Activated CD4-positive, alpha-beta T cell treated with anti-CD3 and anti-CD28 coated beads for 36 hours (primary cell): ENCODE measurements at regions of chr14 and their contacts with region 1.

Region 1: DNA sequence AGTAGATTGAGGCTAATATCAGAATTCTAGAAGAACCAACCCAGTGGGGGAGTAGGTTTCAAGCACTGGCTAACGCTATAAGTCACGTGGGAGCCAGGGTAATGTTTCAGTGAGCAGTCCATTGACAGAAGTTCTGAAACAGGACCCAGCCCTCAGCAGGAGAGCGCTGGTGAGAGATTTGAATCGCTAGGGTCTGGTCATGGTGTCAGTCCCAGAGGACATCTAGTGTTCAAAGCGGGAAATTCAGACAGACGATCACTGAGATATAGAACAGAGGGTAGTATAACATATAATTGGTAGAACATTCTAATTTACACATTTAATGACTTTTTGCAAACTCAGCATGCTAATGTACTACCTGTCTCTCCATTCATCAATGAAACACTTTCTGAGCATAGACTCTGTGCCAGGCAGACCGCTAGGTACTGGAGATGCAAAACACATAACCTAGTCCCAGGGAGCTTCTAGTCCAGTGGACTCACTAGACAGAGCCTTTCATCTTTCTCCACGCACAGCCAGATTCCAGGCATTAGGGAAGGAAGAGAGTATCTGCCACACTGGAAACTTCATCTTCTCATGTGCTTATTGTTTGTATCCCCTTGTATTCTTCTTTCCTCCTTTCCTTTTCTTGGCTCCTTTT is 35.4 kb upstream of the RNASE3 start:
- DNase-seq: peak; percentile 65
- ATAC-seq: peak; percentile 92
- H3K4me3 Mint-ChIP-seq: no peak overlapping the region
- H3K27ac Mint-ChIP-seq: no peak overlapping the region
- H3K4me1 Mint-ChIP-seq: no peaks in the 10 kb centered on the region
- H3K27me3 Mint-ChIP-seq: peaks cover 8% of the 10 kb centered on the region

Region 2: GRCh38 chr14:20697273-20698017 is 158.3 kb before region 1 on chr14:
- CTCF ChIA-PET with region 1: interaction called, 12 read pairs
- POLR2A ChIA-PET with region 1: no interaction called
- intact Hi-C with region 1: loop called (anchors 1 kb)
- DNase-seq: peak; percentile 78
- ATAC-seq: peak; percentile 95
- H3K4me3 Mint-ChIP-seq: no peak overlapping the region
- H3K27ac Mint-ChIP-seq: no peak overlapping the region
- H3K4me1 Mint-ChIP-seq: peaks cover under 1% of the 10 kb centered on the region
- H3K27me3 Mint-ChIP-seq: no peaks in the 10 kb centered on the region

Region 3: GRCh38 chr14:20757965-20758364 is 97.8 kb before region 1 on chr14:
- CTCF ChIA-PET with region 1: interaction called, 4 read pairs
- POLR2A ChIA-PET with region 1: no interaction called
- intact Hi-C with region 1: loop called in 1 of 2 experiments (anchors 2 kb)
- DNase-seq: peak; percentile 54
- ATAC-seq: no peak
- H3K4me3 Mint-ChIP-seq: no peak overlapping the region
- H3K27ac Mint-ChIP-seq: no peak overlapping the region
- H3K4me1 Mint-ChIP-seq: no peaks in the 10 kb centered on the region
- H3K27me3 Mint-ChIP-seq: no peaks in the 10 kb centered on the region

Region 4: GRCh38 chr14:20866963-20867362 is 11.2 kb after region 1 on chr14:
- CTCF ChIA-PET with region 1: interaction called, 40 read pairs
- POLR2A ChIA-PET with region 1: no interaction called
- intact Hi-C with region 1: no loop called
- DNase-seq: no peak
- ATAC-seq: no peak
- H3K4me3 Mint-ChIP-seq: no peak overlapping the region
- H3K27ac Mint-ChIP-seq: no peak overlapping the region
- H3K4me1 Mint-ChIP-seq: no peaks in the 10 kb centered on the region
- H3K27me3 Mint-ChIP-seq: peaks cover 14% of the 10 kb centered on the region

Region 5: DNA sequence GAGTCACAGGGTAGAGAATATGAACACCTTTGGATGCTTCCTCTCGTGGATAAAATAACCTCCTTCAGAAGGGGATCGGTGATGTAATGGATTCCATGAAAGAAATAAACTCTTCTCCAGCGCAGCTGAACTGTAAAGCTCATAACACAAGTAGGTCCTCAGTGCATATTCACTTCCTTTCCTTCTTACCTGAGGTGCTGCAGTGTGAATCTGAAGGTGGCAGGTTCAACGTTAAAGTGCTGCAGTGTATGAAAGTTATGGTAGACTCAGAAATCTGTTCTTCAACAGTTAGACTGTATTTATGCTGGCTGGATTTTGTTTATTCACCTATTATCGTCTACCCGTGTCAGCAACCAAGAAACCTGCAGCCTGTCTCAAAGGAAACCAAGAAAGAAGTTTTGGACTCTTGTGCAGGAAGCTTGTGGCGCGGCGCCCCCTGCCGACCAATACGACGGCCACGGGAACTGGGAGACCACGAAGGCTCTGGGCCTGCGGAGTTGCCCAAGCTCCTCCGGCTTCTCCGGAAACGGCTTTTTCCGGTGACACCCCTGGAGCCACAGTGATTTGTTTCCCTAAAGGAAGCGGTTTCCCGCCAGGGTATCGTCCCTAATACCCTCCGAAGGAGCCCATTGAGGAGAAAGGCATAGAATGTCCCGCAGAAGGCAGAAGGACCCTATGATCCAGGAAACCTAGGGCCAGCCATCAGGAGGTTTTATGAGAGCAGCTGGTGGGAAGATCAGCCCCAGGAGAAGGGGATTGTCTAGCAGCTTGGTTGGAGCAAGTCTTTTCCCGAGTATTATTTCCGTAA is 17.8 kb after region 1 on chr14:
- CTCF ChIA-PET with region 1: interaction called, 40 read pairs
- POLR2A ChIA-PET with region 1: no interaction called
- intact Hi-C with region 1: loop called (anchors 1 kb)
- DNase-seq: peak; percentile 92
- ATAC-seq: peak; percentile 97
- H3K4me3 Mint-ChIP-seq: peak overlapping the region; percentile 8
- H3K27ac Mint-ChIP-seq: no peak overlapping the region
- H3K4me1 Mint-ChIP-seq: peaks cover 18% of the 10 kb centered on the region
- H3K27me3 Mint-ChIP-seq: peaks cover 2% of the 10 kb centered on the region

Region 6: GRCh38 chr14:21039585-21040369 is 184.0 kb after region 1 on chr14:
- CTCF ChIA-PET with region 1: no interaction called
- POLR2A ChIA-PET with region 1: no interaction called
- intact Hi-C with region 1: loop called in 1 of 2 experiments (anchors 2 kb)
- DNase-seq: peak; percentile 29
- ATAC-seq: peak; percentile 75
- H3K4me3 Mint-ChIP-seq: no peak overlapping the region
- H3K27ac Mint-ChIP-seq: no peak overlapping the region
- H3K4me1 Mint-ChIP-seq: peaks cover 6% of the 10 kb centered on the region
- H3K27me3 Mint-ChIP-seq: peaks cover 5% of the 10 kb centered on the region